Sciatic nerve (tissue), 2 donors: ENCODE measurements at regions of chr7 and their contacts with region 1.

Region 1: GRCh38 chr7:24073651-24074420 is 210.2 kb upstream of the NPY start:
- DNase-seq: no peak
- ATAC-seq: no peak

Region 2: GRCh38 chr7:22251281-22251680 is 1822.6 kb before region 1 on chr7:
- intact Hi-C with region 1: no loop called
- DNase-seq: no peak
- ATAC-seq: no peak

Region 3: DNA sequence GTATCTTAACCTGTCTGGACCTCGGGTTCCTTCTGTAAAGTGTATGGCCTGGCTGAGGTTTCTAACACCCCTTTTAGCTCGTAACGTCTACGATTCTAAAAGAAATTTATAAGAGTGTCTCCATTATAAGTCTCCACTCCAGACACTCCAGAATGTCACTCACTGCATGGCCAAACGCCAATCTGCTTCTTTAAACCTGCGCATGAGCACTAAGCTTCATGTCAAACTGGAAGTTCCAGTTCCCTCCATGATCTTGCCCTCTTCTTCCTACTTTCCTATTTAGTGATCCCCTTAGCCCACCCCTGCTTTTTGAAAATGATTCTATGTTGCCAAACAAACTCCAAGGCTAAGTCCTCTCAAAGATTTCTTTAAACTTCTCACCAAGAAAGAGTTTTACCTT is 1395.8 kb after region 1 on chr7:
- intact Hi-C with region 1: no loop called
- DNase-seq: no peak
- ATAC-seq: no peak

Region 4: GRCh38 chr7:25541094-25541821 is 1467.4 kb after region 1 on chr7:
- intact Hi-C with region 1: loop called (anchors 5 kb)
- DNase-seq: no peak
- ATAC-seq: peak; percentile 73